Pancreas (tissue), 10 donors: ENCODE measurements at regions of chr1 and their contacts with region 1.

Region 1: DNA sequence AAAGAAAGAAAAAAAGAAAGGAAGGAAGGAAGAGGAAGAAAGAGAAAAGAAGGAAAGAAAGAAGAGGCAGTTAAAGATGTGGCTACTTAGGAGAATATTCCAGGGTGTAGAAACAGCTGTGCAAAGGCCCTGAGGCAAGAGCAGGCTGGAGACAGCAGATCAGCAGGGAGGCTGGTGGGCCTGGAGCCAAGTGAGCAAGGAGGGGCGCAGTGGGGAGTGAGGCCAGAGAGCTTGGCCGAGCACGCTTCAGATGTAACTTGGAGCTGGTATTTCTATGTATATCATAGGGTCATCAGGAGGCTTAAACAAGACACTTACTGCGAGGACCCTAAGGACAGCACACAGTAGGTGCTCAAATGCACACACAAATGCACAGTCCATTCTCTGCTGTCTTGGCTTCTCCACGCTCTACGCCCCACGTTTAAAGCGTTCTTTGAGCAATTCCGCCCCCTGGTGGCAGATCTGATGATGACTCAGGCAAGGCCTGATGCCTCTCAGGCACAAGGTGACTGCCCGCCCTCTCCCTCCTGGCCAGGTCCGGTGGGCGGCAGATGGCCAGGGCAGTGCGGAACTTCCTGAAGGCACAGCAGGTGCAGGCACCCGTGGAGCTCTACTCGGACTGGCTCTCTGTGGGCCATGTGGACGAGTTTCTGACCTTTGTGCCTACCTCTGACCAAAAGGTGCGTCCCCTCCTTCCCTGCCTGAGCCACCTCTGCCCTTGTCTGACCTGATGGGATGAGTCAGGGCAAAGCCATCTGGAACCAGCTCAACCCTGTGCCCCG is 11.9 kb upstream of the PADI3 start:
- DNase-seq: peak; percentile 74 to 98 (median 90)
- ATAC-seq: peak; percentile 51 to 83 (median 78)
- H3K4me3 ChIP-seq: no peak overlapping the region
- H3K27ac ChIP-seq: no peak overlapping the region
- H3K4me1 ChIP-seq: peaks cover 2 to 5% (median 4%) of the 10 kb centered on the region in 3 donors
- H3K27me3 ChIP-seq: no peaks in the 10 kb centered on the region
- CTCF ChIP-seq: peak; percentile 85 to 92 (median 87)

Region 2: DNA sequence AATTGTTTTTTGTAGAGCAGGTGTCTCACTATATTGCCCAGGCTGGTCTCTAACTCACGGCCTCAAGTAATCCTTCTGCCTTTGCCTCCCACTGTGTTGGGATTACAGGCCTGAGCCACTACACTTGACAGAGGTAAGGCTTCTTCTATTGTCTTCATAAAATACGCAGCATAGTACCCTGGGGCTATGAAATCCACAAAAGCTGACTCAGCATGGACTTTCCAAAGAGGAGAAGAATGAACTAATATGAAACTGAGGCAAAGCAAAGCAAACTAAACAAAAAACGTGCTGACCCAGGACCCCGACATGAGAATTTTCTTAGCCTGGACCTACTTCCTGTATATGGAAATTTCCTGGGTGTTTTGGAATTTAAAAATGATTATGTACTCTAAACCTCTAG is 206.8 kb before region 1 on chr1:
- intact Hi-C with region 1: no loop called
- DNase-seq: peak in 1 of 6 donors; percentile 4
- ATAC-seq: no peak
- H3K4me3 ChIP-seq: no peak overlapping the region
- H3K27ac ChIP-seq: peak overlapping the region in 1 of 4 donors; percentile 84
- H3K4me1 ChIP-seq: peaks cover 10 to 42% (median 35%) of the 10 kb centered on the region in 3 donors
- H3K27me3 ChIP-seq: no peaks in the 10 kb centered on the region
- CTCF ChIP-seq: no peak

Region 3: GRCh38 chr1:17059739-17060460 is 177.1 kb before region 1 on chr1:
- intact Hi-C with region 1: loop called in 2 of 3 experiments (anchors 5 kb)
- DNase-seq: peak; percentile 73 to 90 (median 76)
- ATAC-seq: peak; percentile 85 to 96 (median 94)
- H3K4me3 ChIP-seq: no peak overlapping the region
- H3K27ac ChIP-seq: no peak overlapping the region
- H3K4me1 ChIP-seq: no peaks in the 10 kb centered on the region
- H3K27me3 ChIP-seq: no peaks in the 10 kb centered on the region
- CTCF ChIP-seq: peak in 3 of 4 donors; percentile 58 to 72 (median 59)

Region 4: DNA sequence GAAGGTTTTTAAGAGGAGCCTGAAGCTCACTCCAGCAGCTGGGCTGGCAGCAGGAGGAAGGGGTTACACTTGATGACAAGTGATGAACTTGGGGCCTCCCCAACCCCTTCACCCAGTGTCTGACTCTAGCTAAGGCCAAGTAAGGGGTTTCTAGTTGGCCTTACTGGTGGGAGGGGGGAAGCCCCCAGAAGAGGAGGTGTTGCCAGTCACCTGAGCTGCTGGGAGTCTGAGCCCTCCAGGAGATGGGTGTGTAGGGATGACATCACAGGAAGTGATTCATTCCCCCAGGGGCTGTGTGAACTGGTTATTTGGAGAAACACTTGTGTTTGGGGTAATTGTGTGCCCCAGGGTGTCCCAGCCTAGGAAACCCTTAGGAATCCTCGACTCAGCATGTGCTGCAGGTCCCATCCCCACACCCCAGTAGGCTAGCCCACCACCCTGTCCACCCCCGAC is 29.0 kb before region 1 on chr1:
- intact Hi-C with region 1: no loop called
- DNase-seq: no peak
- ATAC-seq: peak in 2 of 4 donors; percentile 29 to 36
- H3K4me3 ChIP-seq: no peak overlapping the region
- H3K27ac ChIP-seq: no peak overlapping the region
- H3K4me1 ChIP-seq: no peaks in the 10 kb centered on the region
- H3K27me3 ChIP-seq: no peaks in the 10 kb centered on the region
- CTCF ChIP-seq: no peak